Astrocyte of the cerebellum (primary cell): ENCODE measurements at regions of chr6 and their contacts with region 1.

Region 1: DNA sequence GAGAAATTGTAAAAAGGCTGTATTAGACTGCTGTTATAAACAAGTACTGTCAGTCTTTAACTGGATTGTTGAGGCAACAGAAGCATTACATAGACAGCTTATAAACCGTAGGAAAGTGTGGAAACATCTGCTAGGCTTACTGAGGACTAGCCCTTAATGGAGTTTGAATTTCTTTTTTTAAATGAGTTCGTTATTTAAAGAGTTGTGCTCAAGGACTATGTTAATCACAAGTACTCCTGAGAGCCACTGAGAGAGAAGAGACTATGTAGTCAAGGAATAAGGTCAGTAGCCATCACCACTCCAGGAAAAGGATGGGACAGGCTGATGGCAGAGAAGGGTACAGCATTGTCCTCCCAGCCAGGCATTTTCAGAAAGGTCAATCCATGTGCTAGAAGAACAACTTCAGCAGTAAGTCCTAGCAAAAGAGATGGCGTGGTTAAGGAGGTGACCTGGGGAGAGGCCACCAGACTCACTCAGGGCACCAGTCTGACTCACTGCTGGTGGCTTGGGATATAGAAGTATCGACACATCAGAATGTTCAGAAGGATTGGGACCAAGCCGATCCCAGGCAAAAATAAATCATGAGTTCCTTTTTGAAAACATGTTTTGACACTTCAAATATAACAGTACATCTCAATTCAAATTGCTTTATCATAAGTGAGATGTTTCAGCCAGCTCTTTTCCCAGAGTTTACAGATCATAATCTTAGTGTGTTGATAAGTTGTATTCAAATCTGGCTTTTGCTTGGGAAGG is 6.4 kb downstream of the RPS12 start:
- DNase-seq: no peak
- H3K4me3 ChIP-seq: no peak overlapping the region
- CTCF ChIP-seq: no peak

Region 2: DNA sequence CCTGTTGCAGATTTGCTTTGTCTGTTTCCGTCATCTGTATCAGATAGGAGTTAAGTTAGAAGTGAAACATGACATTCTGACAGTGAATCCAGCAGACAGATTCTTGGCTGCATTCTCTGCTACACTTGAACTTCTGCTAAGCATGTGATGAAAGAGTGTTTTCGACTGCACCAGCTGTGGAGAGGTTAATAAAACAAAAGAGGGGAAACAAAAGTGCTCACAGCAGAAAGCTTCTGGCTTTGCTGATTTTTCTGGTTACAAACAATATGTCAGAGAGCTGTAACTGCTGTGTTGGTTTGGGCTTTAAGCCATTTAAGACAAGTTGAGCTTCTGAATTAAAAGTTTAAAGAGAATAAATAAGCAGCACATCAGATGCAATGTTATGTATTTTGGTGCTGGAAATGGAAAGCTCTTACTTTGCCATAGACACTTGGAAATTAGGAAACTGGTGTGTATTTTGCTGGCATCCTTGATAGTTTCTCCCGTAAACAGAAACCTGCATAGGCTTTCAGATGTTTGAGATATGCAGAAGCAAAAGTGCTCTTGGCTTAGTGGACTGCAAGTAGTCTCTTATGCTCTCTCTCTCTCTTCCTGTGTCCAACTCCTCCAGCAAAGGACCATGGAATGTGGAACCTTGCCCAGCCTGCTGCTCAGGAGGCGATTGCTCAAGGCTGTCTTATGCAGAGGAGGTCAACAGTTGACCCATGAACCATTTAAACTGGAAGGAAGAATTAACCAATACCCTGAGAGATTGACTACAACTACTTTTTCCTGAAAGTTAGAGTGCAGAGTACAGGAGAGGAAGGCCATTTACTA is 98.4 kb after region 1 on chr6:
- in situ Hi-C with region 1: loop called (anchors 5 kb)
- DNase-seq: peak; percentile 87
- H3K4me3 ChIP-seq: no peak overlapping the region
- CTCF ChIP-seq: no peak